Heart right ventricle (tissue), 16 donors: ENCODE measurements at regions of chr3 and their contacts with region 1.

Region 1: DNA sequence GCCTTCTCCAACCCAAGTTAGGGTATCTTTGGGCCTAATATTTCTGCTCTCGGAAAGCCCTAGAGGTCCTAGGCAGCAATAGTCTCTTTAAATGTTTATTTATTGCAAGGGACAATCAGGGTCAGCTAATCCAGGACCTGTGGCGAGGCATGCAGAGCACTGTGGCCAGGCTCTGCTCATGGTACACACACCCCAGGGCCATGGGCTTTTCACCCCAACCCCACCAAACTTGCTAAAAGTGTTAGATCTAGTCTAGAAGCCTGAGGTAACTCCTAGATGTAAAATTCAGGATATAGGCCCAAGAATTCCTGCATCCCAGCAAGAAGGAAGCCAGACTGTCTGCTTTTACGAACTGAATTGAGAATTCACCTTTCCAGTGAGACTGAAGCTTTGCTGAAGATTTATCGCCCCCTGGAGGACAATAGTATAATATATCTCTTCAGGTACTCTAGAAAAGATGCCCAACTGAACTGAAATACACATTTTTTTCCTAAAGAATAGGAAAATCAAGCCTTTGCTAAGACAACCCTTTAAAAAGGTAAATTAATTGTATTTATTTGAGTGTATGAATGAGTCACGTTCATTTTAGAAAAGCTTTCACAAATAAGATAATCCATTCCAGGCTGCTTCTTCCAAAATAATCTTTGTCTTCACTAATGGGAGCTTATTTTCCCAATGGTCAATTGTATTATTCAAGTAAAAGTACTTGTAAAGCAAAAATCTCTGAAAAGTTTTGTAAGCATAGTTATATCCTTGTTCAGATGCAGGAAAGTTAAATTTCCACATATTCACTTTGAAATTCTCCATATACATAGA is 89.8 kb downstream of the LRRC3B start:
- DNase-seq: peak in 1 of 2 donors; percentile 10
- ATAC-seq: peak in 6 of 8 donors; percentile 44 to 76 (median 66)
- H3K4me3 ChIP-seq: no peak overlapping the region
- H3K27ac ChIP-seq: no peak overlapping the region
- H3K4me1 ChIP-seq: peaks cover 0 to 5% (median 0%) of the 10 kb centered on the region in 9 donors
- H3K27me3 ChIP-seq: no peaks in the 10 kb centered on the region
- CTCF ChIP-seq: peak; percentile 50 to 81 (median 73)

Region 2: GRCh38 chr3:25648107-25648535 is 1064.3 kb before region 1 on chr3:
- intact Hi-C with region 1: loop called in 8 of 10 experiments (anchors 5 to 10 kb)
- DNase-seq: peak in 1 of 2 donors; percentile 72
- ATAC-seq: peak in 7 of 8 donors; percentile 61 to 92 (median 89)
- H3K4me3 ChIP-seq: no peak overlapping the region
- H3K27ac ChIP-seq: no peak overlapping the region
- H3K4me1 ChIP-seq: peaks cover 0 to 41% (median 21%) of the 10 kb centered on the region in 9 donors
- H3K27me3 ChIP-seq: no peaks in the 10 kb centered on the region
- CTCF ChIP-seq: peak; percentile 62 to 93 (median 88)

Region 3: DNA sequence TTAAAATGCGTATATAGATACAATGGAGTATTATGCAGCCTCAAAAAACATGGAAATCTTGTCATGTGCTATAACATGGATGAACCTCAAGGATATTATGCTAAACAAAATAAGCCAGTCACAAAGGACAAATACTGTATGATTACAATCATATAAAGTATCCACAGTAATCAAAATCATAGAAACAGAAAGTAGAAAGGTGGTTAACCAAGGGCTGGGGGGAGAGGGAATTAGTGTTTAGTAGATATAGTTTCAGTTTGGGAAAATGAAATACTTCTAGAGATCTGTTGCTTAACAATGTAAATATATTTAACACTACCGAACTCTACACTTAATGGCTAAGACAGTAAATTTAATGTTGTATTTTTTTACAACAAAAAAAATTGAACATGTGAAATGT is 1056.8 kb before region 1 on chr3:
- intact Hi-C with region 1: loop called in 2 of 10 experiments (anchors 10 kb)
- DNase-seq: no peak
- ATAC-seq: no peak
- H3K4me3 ChIP-seq: no peak overlapping the region
- H3K27ac ChIP-seq: no peak overlapping the region
- H3K4me1 ChIP-seq: peaks cover 0 to 88% (median 76%) of the 10 kb centered on the region in 9 donors
- H3K27me3 ChIP-seq: no peaks in the 10 kb centered on the region
- CTCF ChIP-seq: no peak

Region 4: DNA sequence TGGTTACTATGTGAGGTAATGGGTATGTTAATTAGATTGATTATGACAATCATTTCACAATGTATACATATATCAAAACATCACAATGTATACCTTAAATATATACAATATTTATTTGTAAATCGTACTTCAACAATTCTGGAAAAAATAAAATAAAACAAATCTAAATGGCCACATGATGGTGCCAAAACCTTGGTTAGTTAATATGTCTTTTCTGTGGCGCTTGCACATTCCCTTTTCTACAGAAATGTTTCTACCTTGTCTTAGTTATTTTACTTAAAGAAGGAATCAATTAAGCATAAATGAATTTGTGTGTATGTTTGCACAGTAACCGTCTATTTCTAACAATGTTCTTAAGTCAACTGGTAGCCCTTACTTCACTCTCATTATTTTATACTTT is 869.1 kb before region 1 on chr3:
- intact Hi-C with region 1: loop called in 6 of 10 experiments (anchors 2 to 10 kb)
- DNase-seq: no peak
- ATAC-seq: no peak
- H3K4me3 ChIP-seq: no peak overlapping the region
- H3K27ac ChIP-seq: no peak overlapping the region
- H3K4me1 ChIP-seq: no peaks in the 10 kb centered on the region
- H3K27me3 ChIP-seq: no peaks in the 10 kb centered on the region
- CTCF ChIP-seq: peak in 7 of 9 donors; percentile 27 to 55 (median 29)

Region 5: DNA sequence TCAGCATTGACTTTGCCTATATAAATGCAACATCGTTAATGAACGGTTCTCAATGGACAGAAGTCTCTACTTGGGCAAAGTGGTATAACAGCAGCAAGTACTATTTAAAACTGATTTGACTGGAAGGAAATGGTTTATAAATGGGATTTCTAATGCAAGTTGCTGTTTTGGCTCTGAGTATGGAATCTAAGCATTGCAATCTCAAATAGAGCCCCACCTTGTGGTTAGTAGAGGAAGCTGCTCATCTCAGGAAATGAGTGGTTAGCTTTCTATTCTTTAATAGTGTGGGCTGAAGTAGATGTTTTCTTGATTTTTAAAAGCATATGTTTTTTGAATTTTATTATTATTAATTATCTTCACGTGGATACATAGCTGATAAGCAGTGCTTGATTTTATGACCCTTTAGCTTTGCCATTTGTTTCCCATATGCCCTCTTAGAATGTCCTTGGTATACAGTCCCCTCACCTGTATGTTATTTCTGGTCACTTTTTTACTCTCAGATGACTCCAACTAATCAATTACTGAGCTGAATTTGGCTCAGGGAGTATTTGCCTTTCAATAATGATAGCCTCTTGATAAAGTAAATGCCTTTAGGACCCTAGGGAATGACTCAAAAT is 855.4 kb before region 1 on chr3:
- intact Hi-C with region 1: loop called in 1 of 10 experiments (anchors 10 kb)
- DNase-seq: no peak
- ATAC-seq: peak in 2 of 8 donors; percentile 39 to 56
- H3K4me3 ChIP-seq: no peak overlapping the region
- H3K27ac ChIP-seq: no peak overlapping the region
- H3K4me1 ChIP-seq: no peaks in the 10 kb centered on the region
- H3K27me3 ChIP-seq: no peaks in the 10 kb centered on the region
- CTCF ChIP-seq: peak; percentile 44 to 83 (median 67)

Region 6: DNA sequence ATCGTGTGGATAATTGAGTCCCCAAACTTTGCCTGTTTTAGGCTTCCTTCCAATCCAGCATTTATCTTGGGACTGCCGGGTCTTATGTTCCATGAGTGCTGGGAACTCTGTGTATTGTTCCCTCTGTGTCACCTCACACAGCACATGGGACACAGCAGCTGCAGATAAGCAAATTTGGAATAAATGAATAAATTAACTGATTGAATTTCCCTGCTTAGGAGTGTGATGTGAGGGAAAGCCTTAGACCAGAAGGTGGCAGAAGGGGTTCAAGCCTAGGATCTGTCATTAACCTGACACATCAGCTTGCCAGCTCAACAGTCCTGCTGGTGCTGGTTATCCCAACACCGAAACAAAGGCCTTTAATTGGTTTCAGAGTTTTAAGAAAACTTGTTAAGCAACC is 808.2 kb before region 1 on chr3:
- intact Hi-C with region 1: loop called in 9 of 10 experiments (anchors 1 to 5 kb)
- DNase-seq: peak in 1 of 2 donors; percentile 30
- ATAC-seq: peak in 6 of 8 donors; percentile 66 to 92 (median 84)
- H3K4me3 ChIP-seq: no peak overlapping the region
- H3K27ac ChIP-seq: no peak overlapping the region
- H3K4me1 ChIP-seq: peaks cover 0 to 17% (median 0%) of the 10 kb centered on the region in 9 donors
- H3K27me3 ChIP-seq: no peaks in the 10 kb centered on the region
- CTCF ChIP-seq: peak; percentile 21 to 76 (median 61)

Region 7: DNA sequence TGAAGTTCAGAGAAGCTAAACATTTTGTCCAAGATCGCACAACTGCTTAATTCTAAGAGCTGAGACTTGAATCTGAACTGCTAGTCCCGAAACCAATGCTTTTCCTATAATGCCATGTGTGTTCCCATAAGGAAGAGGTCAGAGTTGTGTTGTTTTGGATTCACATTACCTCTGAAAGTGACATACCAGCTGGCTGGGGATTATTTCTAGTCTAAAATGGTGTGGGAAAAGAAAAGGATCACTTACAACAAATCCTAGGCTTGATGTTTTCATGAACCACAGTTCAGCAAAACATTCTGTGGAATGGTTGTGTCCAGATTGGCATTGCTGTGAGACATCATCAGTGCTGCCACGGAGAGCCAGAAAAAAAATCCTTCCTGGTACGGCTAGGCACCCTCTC is 124.8 kb before region 1 on chr3:
- intact Hi-C with region 1: no loop called
- DNase-seq: no peak
- ATAC-seq: no peak
- H3K4me3 ChIP-seq: no peak overlapping the region
- H3K27ac ChIP-seq: no peak overlapping the region
- H3K4me1 ChIP-seq: no peaks in the 10 kb centered on the region
- H3K27me3 ChIP-seq: no peaks in the 10 kb centered on the region
- CTCF ChIP-seq: no peak